HAP-1 (cell line): ENCODE measurements at regions of chr16 and their contacts with region 1.

Region 1: GRCh38 chr16:25838724-25839186 is 147.0 kb downstream of the HS3ST4 start:
- DNase-seq: peak; percentile 27 to 41
- H3K4me3 ChIP-seq: no peak overlapping the region
- H3K4me1 ChIP-seq: no peaks in the 10 kb centered on the region
- H3K27me3 ChIP-seq: no peaks in the 10 kb centered on the region

Region 2: GRCh38 chr16:27109666-27110523 is 1271.1 kb after region 1 on chr16:
- in situ Hi-C with region 1: loop called (anchors 25 kb)
- DNase-seq: peak; percentile 59 to 85
- H3K4me3 ChIP-seq: peak overlapping the region; percentile 16; the same call in 1 of the 2 replicates
- H3K4me1 ChIP-seq: no peaks in the 10 kb centered on the region
- H3K27me3 ChIP-seq: no peaks in the 10 kb centered on the region